OCI-LY7 (cell line): ENCODE measurements at regions of chr10 and their contacts with region 1.

Region 1: DNA sequence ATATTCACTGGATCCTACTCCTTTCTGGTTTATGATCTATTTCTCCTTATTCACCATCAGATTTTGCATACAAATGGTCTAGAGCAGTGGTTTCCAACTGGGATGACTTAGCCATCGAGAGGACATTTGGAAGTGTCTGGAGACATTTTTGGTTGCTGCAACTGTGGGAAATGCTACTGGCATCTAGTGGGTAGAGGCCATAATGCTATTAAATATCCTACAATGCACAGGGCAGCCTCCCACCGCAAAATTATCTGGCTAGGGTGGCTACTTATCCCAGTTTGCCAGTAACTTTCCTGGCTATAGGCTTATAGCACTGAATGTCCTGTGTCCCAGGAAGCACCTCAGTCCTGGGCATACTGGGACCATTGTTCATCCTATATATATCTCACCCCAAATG is 21.5 kb upstream of the DDX50 start:
- DNase-seq: no peak
- H3K4me3 ChIP-seq: no peak overlapping the region
- H3K27ac ChIP-seq: no peak overlapping the region
- H3K4me1 ChIP-seq: no peaks in the 10 kb centered on the region
- CTCF ChIP-seq: no peak

Region 2: GRCh38 chr10:68700197-68700596 is 179.4 kb before region 1 on chr10:
- CTCF ChIA-PET with region 1: no interaction called
- POLR2A ChIA-PET with region 1: no interaction called
- intact Hi-C with region 1: loop called (anchors 10 kb)
- DNase-seq: no peak
- H3K4me3 ChIP-seq: no peak overlapping the region
- H3K27ac ChIP-seq: no peak overlapping the region
- H3K4me1 ChIP-seq: no peaks in the 10 kb centered on the region
- CTCF ChIP-seq: no peak

Region 3: DNA sequence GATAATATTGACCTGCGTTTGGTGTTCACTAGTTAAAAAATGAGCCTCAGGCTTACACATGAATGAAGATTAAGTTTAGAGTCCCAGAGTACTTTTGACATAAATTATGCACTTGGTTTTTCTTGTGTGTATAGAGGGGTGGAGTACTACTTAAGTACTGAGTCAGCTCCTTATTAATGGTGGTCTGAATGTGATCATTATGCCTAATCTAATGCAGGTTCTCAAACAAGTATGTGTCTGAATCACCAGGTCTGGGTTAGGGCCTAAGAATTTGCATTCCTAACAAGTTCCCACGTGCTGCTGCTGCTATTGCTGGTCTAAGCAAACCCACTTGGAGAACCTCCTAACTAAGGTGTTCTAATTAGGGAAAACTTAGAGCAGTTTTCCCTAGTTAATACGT is 83.0 kb before region 1 on chr10:
- CTCF ChIA-PET with region 1: no interaction called
- POLR2A ChIA-PET with region 1: no interaction called
- intact Hi-C with region 1: no loop called
- DNase-seq: no peak
- H3K4me3 ChIP-seq: no peak overlapping the region
- H3K27ac ChIP-seq: no peak overlapping the region
- H3K4me1 ChIP-seq: no peaks in the 10 kb centered on the region
- CTCF ChIP-seq: no peak